Panc1 (cell line): ENCODE measurements at regions of chr7 and their contacts with region 1.

Region 1: GRCh38 chr7:139505563-139505962 is 17.9 kb upstream of the CLEC2L start:
- DNase-seq: no peak
- ATAC-seq: peak; percentile 42; the same call in 1 of the 2 replicates
- H3K4me3 ChIP-seq: no peak overlapping the region
- H3K27ac ChIP-seq: no peak overlapping the region
- H3K4me1 ChIP-seq: no peaks in the 10 kb centered on the region
- H3K27me3 ChIP-seq: no peaks in the 10 kb centered on the region
- CTCF ChIP-seq: peak; percentile 68

Region 2: DNA sequence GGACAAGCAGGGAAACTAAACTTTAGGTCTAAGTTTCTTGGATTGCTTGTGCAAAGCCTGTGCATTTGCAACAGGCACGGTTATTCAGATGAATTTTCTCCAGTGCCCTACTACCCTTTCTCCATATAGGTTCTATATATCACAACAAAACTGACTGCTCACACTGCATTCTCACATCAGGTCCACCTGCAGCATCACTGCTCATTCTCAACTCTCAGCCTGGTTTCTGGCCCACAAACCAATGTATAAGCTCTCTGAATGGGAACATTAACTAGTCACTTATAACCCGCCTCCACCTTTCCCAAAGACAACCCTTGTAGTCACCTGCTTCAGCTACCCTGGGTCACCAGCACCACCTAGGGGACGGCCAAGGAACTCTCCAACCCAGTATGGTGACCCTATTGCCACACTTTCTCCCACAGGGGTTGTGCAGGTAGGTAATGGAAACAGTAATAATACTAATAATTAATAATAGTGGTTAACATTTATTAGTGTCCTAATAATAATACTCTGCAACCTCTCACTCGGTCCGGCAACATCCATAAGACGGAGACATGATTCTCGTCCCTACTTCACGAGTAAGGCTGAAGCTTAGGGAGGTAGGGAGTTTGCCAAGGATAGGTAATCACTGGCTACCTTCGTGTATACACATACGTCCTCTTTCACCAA is 115.2 kb after region 1 on chr7:
- CTCF ChIA-PET with region 1: no interaction called
- POLR2A ChIA-PET with region 1: no interaction called
- in situ Hi-C with region 1: no loop called
- intact Hi-C with region 1: loop called (anchors 10 kb)
- DNase-seq: peak; percentile 28
- ATAC-seq: peak; percentile 83
- H3K4me3 ChIP-seq: no peak overlapping the region
- H3K27ac ChIP-seq: no peak overlapping the region
- H3K4me1 ChIP-seq: no peaks in the 10 kb centered on the region
- H3K27me3 ChIP-seq: no peaks in the 10 kb centered on the region
- CTCF ChIP-seq: peak; percentile 87

Region 3: GRCh38 chr7:139842401-139843210 is 337.0 kb after region 1 on chr7:
- CTCF ChIA-PET with region 1: no interaction called
- POLR2A ChIA-PET with region 1: interaction called, 10 read pairs
- in situ Hi-C with region 1: no loop called
- intact Hi-C with region 1: no loop called
- DNase-seq: no peak
- ATAC-seq: peak; percentile 42; the same call in 1 of the 2 replicates
- H3K4me3 ChIP-seq: no peak overlapping the region
- H3K27ac ChIP-seq: no peak overlapping the region
- H3K4me1 ChIP-seq: no peaks in the 10 kb centered on the region
- H3K27me3 ChIP-seq: no peaks in the 10 kb centered on the region
- CTCF ChIP-seq: no peak

Region 4: DNA sequence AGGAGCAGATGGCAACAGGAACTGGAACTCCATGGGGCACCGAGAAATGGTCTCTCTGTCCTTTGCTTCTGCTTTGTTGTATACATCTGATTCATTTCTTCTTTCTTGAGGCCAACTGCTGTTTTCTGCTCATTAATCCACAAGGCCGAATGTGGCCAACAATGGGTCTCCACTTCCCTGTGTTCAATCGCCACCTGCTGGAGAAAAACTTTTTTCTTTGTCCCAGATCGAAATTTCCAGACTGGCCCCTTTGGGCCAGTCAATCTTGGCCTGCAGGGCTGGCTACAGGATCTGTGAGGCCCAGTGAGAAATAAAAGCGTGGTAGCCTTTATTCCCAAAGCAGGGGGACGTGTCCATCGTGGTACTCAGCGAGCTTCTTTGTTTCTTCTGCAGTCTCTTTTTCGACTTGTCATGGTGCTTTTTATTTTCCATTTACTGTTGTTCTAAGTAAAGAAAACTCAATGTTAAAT is 498.4 kb after region 1 on chr7:
- CTCF ChIA-PET with region 1: no interaction called
- POLR2A ChIA-PET with region 1: no interaction called
- in situ Hi-C with region 1: no loop called
- intact Hi-C with region 1: loop called (anchors 5 kb)
- DNase-seq: peak; percentile 35
- ATAC-seq: peak; percentile 50; the same call in 1 of the 2 replicates
- H3K4me3 ChIP-seq: no peak overlapping the region
- H3K27ac ChIP-seq: no peak overlapping the region
- H3K4me1 ChIP-seq: peaks cover 4% of the 10 kb centered on the region; the same call in 1 of the 2 replicates
- H3K27me3 ChIP-seq: no peaks in the 10 kb centered on the region
- CTCF ChIP-seq: peak; percentile 82

Region 5: GRCh38 chr7:140096459-140096858 is 590.9 kb after region 1 on chr7:
- CTCF ChIA-PET with region 1: no interaction called
- POLR2A ChIA-PET with region 1: no interaction called
- in situ Hi-C with region 1: no loop called
- intact Hi-C with region 1: no loop called
- DNase-seq: no peak
- ATAC-seq: no peak
- H3K4me3 ChIP-seq: no peak overlapping the region
- H3K27ac ChIP-seq: no peak overlapping the region
- H3K4me1 ChIP-seq: no peaks in the 10 kb centered on the region
- H3K27me3 ChIP-seq: no peaks in the 10 kb centered on the region
- CTCF ChIP-seq: no peak